Uterus (tissue), 4 donors: ENCODE measurements at regions of chr22 and their contacts with region 1.

Region 1: DNA sequence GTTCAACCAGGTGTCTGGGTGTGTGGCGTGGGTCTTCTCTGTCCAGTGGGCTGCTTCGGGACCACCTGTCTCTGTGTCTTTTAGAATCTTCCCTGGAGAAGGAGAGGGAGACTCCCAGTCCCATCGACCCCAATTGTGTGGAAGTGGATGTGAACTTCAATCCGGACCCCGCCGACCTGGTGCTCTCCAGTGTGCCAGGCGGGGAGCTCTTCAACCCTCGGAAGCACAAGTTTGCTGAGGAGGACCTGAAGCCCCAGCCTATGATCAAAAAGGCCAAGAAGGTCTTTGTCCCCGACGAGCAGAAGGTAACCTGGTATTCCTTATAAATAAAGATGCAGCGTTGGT is 12.2 kb downstream of the TEF start:
- DNase-seq: no peak
- H3K4me3 ChIP-seq: no peak overlapping the region
- H3K27ac ChIP-seq: peak overlapping the region; percentile 72 to 81
- H3K4me1 ChIP-seq: peaks cover 0 to 6% of the 10 kb centered on the region in 2 donors
- H3K27me3 ChIP-seq: no peaks in the 10 kb centered on the region
- CTCF ChIP-seq: no peak
- POLR2A ChIP-seq: no peak

Region 2: GRCh38 chr22:41184679-41185078 is 209.3 kb before region 1 on chr22:
- intact Hi-C with region 1: no loop called
- DNase-seq: no peak
- H3K4me3 ChIP-seq: no peak overlapping the region
- H3K27ac ChIP-seq: no peak overlapping the region
- H3K4me1 ChIP-seq: no peaks in the 10 kb centered on the region
- H3K27me3 ChIP-seq: no peaks in the 10 kb centered on the region
- CTCF ChIP-seq: no peak
- POLR2A ChIP-seq: no peak

Region 3: DNA sequence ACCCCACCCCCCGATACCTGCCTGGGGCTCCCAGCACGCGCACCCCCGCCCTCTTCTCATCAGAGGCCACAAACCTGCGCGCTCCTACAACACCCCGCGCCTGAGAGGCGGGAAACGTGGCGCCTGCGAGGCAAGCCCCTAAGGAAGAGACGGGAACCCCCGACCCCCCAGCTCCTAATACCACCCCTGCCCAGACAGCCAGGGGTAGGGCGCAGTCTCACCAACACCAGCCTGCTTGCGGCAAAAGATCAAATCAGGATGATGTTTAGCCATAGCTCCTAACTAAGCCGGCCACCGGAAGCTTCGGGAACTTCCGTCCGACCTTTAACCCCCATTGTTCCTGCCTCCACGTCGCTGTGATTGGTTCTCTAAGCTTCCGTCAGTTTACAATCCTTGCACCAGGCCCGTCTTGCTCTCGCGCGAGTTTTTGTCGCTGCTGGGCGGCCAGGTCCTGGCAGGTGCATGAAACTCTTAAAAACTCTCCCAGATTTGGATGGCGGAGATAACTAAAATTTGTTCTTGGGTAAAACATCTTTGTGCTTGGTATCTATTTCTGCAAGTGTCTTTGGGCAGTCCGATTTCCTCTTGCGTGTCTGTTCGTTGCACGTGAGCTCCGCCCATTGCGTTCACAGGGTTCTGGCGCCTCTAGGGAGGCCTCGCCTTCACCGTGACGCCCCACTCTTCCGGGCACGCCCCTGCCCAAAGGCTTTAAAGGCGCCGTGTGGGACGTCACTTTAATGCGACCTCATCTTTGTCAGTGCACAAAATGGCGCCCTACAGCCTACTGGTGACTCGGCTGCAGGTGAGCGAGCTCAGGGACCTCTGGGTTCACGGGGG is 74.6 kb after region 1 on chr22 and contains the starts of genes ACO2 and PHF5A:
- intact Hi-C with region 1: no loop called
- DNase-seq: peak; percentile 98
- H3K4me3 ChIP-seq: peak within 1 kb of the TSS; percentile 94 to 100
- H3K27ac ChIP-seq: peak within 1 kb of the TSS; percentile 91 to 94
- H3K4me1 ChIP-seq: peaks cover 0 to 5% of the 10 kb centered on the region in 2 donors
- H3K27me3 ChIP-seq: no peaks in the 10 kb centered on the region
- CTCF ChIP-seq: peak in 2 of 4 experiments; percentile 3 to 28
- POLR2A ChIP-seq: peak in 1 of 2 donors; percentile 68
- total RNA-seq, gene ACO2: 21.5 to 64.4 (median 47.1) TPM
- total RNA-seq, gene PHF5A: 38.5 to 65.1 (median 46.4) TPM

Region 4: DNA sequence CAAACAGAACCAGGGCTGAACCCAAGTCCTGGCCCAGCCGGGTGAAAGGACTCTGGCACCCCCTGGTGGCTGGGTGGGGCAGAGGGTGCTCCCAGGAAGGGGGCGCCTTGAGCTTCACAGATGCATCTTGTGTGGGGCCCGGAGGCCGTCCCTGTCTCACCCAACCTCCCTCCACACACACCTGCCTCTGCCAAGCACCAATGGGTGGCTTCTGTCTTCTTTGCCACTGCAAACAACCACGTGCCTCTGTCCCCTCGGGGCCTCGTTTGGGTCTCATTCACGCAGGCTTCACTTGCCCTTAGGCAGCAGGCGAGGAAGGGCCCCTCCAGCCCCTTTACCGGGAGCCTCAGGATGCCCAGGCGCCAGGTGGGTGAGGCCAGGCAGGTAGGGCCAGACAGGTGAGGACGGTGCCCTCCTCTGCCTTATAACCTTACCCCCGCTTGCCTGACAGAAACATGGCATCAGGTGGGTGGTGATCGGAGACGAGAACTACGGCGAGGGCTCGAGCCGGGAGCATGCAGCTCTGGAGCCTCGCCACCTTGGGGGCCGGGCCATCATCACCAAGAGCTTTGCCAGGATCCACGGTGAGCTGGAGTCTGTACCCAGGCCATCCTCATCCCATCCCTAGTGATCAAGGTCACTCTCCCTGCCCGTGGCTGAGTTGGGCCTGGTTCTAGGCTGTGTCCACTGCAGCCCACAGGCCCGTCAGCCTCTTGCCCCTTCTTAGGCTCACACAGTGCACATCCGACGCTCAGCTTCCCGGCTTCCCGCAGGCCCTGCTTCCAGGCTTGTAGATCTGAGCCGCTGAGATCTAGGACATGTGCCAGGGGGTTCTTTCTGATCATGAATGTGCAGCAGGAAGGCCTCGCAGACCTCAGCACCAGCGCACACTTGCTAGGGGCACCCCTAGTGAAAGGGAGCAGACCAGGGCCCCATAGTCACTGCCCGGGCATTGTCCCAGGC is 133.1 kb after region 1 on chr22:
- intact Hi-C with region 1: loop called (anchors 5 kb)
- DNase-seq: peak in 1 of 2 donors; percentile 57
- H3K4me3 ChIP-seq: no peak overlapping the region
- H3K27ac ChIP-seq: peak overlapping the region; percentile 16 to 89
- H3K4me1 ChIP-seq: peaks cover 0 to 14% of the 10 kb centered on the region in 2 donors
- H3K27me3 ChIP-seq: no peaks in the 10 kb centered on the region
- CTCF ChIP-seq: peak; percentile 60 to 69 (median 64)
- POLR2A ChIP-seq: no peak